SK-N-SH (cell line): ENCODE measurements at regions of chr11 and their contacts with region 1.

Region 1: GRCh38 chr11:63635762-63636465 is 21.7 kb upstream of the PLAAT3 start:
- DNase-seq: peak; percentile 67
- H3K4me3 ChIP-seq: no peak overlapping the region; a peak in 1 of 4 replicates
- H3K27ac ChIP-seq: no peak overlapping the region
- H3K4me1 ChIP-seq: no peaks in the 10 kb centered on the region
- H3K27me3 ChIP-seq: no peaks in the 10 kb centered on the region
- CTCF ChIP-seq: peak; percentile 88
- EP300 ChIP-seq: no peak
- RAD21 ChIP-seq: peak; percentile 91

Region 2: GRCh38 chr11:63592975-63593395 is 42.9 kb before region 1 on chr11:
- CTCF ChIA-PET with region 1: interaction called, 15 read pairs
- POLR2A ChIA-PET with region 1: no interaction called
- DNase-seq: peak; percentile 36
- H3K4me3 ChIP-seq: no peak overlapping the region
- H3K27ac ChIP-seq: no peak overlapping the region
- H3K4me1 ChIP-seq: no peaks in the 10 kb centered on the region
- H3K27me3 ChIP-seq: no peaks in the 10 kb centered on the region
- CTCF ChIP-seq: peak; percentile 54
- EP300 ChIP-seq: no peak
- RAD21 ChIP-seq: peak; percentile 73

Region 3: DNA sequence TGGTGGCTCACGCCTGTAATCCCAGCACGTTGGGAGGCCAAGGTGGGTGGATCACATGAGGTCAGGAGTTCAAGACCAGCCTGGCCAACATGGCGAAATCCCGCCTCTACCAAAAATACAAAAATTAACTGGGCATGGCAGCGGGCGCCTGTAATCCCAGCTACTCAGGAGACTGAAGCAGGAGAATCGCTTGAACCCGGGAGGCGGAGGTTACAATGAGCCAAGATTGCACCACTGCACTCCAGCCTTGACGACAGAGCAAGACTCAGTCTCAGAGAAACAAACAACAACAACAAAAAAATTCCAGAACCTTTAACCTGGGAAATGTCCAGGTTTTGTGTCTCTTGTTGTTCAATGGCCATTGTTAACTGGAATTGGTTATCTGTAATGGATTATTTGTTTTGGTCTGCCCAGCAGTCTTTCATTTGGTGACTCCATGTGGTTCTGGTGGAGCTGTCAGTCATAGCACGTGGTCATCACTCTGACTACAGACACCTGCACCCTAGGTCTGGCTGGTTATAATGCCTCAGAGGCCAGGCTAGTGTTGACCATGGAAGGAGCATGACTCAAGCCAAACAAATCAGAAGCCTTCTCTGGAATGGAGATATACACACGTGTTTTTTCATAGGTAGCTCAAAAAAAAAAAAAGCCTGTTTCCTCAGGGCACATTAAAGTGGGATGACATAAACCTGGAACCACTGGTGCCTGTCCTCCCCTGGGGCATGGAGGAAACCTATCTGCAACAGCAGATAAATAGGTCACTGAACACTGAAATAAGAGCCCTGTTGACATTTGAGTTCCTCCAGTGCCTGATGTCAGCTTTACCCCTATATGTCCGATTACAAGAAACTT is 13.8 kb before region 1 on chr11:
- CTCF ChIA-PET with region 1: interaction called, 31 read pairs
- POLR2A ChIA-PET with region 1: interaction called, 4 read pairs
- DNase-seq: no peak
- H3K4me3 ChIP-seq: no peak overlapping the region
- H3K27ac ChIP-seq: no peak overlapping the region
- H3K4me1 ChIP-seq: peaks cover 0 to 17% of the 10 kb centered on the region in 2 experiments; a peak in 2 of 4 replicates
- H3K27me3 ChIP-seq: no peaks in the 10 kb centered on the region
- CTCF ChIP-seq: no peak
- EP300 ChIP-seq: no peak
- RAD21 ChIP-seq: no peak

Region 4: GRCh38 chr11:63652671-63653070 is 16.8 kb after region 1 on chr11:
- CTCF ChIA-PET with region 1: interaction called, 10 read pairs
- POLR2A ChIA-PET with region 1: no interaction called
- DNase-seq: no peak
- H3K4me3 ChIP-seq: no peak overlapping the region
- H3K27ac ChIP-seq: no peak overlapping the region
- H3K4me1 ChIP-seq: no peaks in the 10 kb centered on the region
- H3K27me3 ChIP-seq: no peaks in the 10 kb centered on the region
- CTCF ChIP-seq: no peak
- EP300 ChIP-seq: no peak
- RAD21 ChIP-seq: no peak